Calu3 (cell line): ENCODE measurements at regions of chr19 and their contacts with region 1.

Region 1: DNA sequence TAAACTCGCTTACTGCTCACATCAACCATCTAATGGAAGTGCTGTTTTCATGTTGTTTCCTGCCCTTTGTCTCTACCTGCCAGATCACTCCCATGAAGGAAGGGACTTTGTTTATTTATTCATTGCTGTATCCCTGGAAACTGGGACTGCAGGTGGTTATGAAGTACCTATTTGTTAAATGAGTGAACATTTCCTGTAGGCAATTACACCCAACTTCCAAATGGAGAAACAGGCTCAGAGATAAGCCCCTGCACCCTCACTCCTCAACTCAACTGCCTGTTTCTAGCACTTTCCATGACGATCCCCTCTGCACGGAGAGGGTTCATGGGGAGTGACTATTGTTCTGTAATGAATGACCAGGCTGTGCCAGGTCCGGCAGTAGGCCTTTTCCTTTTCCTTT is 1.9 kb upstream of the SELENOW start:
- DNase-seq: peak; percentile 39
- H3K4me3 Mint-ChIP-seq: peak overlapping the region; percentile 99
- H3K27ac Mint-ChIP-seq: peak overlapping the region; percentile 99
- H3K4me1 Mint-ChIP-seq: peaks cover 44% of the 10 kb centered on the region
- H3K27me3 Mint-ChIP-seq: no peaks in the 10 kb centered on the region
- CTCF ChIP-seq: no peak

Region 2: GRCh38 chr19:47663841-47664771 is 112.5 kb before region 1 on chr19:
- CTCF ChIA-PET with region 1: no interaction called
- intact Hi-C with region 1: no loop called
- DNase-seq: peak; percentile 52
- H3K4me3 Mint-ChIP-seq: peak overlapping the region; percentile 20
- H3K27ac Mint-ChIP-seq: peak overlapping the region; percentile 80
- H3K4me1 Mint-ChIP-seq: peaks cover 52% of the 10 kb centered on the region
- H3K27me3 Mint-ChIP-seq: no peaks in the 10 kb centered on the region
- CTCF ChIP-seq: no peak

Region 3: GRCh38 chr19:47765523-47766358 is 10.8 kb before region 1 on chr19:
- CTCF ChIA-PET with region 1: interaction called, 11 read pairs
- intact Hi-C with region 1: no loop called
- DNase-seq: peak; percentile 66
- H3K4me3 Mint-ChIP-seq: no peak overlapping the region
- H3K27ac Mint-ChIP-seq: peak overlapping the region; percentile 29
- H3K4me1 Mint-ChIP-seq: no peaks in the 10 kb centered on the region
- H3K27me3 Mint-ChIP-seq: no peaks in the 10 kb centered on the region
- CTCF ChIP-seq: peak; percentile 80